ENCODE measurements at regions of chr10 and their contacts with region 1.

Region 1: DNA sequence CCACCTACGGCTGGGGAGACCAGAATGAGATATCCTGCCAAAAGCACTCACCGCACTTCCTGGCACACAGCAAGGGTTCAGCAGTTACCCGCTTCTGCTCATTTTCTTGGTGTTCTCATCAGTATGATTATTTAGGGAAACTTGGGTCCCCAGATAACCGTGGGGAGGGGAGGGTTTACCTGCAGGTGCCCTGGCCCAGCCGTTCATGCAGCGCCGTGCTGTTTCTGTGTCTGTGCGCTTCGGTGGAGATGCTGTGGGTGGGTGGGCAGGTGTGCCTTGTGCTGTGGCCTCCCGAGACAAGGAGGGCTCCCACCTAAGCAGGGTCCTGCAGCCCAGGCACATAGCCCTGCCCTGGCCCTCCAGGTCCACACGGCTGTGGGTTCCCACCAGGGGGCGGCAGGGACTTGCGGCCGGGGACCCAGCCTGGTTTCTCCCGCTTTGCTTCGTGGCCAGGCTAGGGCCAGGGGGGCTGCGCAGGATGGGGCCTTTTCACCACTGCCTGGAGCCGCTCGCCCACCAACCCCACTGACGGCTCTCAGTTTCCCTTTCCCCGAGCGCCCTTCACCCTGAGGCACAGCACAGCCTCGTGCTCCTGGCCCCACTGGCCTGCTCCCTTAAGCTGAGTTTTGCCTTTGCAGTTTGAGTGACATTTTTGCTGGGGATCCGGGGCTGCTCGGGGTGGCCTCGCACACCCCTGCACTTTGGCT is 78.5 kb downstream of the LHPP start:
- DNase-seq: peak; percentile 89

Region 2: DNA sequence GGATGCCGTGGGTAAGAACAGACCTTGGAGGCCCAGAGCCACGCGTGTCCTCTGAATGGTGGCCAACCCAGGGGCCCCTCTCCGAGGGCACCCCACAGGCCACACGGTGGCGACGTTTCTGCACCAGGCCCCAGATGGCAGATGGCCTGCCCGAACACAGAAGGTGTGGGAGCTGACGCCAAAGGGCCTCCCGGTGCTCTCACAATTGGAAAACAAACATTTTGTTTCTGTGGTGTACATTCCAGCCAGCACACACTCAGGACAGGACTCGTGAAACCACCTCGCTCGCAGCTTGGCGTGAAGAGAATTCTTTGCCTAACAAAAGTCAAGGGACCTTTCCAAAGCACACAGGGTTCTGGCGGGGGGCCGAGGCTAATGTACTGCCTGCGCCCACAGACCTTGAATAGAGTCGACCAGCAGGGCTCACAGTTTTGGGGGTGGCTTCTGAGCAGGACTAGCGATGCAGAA is 92.0 kb after region 1 on chr10:
- intact Hi-C with region 1: loop called (anchors 5 kb)
- DNase-seq: no peak

Region 3: DNA sequence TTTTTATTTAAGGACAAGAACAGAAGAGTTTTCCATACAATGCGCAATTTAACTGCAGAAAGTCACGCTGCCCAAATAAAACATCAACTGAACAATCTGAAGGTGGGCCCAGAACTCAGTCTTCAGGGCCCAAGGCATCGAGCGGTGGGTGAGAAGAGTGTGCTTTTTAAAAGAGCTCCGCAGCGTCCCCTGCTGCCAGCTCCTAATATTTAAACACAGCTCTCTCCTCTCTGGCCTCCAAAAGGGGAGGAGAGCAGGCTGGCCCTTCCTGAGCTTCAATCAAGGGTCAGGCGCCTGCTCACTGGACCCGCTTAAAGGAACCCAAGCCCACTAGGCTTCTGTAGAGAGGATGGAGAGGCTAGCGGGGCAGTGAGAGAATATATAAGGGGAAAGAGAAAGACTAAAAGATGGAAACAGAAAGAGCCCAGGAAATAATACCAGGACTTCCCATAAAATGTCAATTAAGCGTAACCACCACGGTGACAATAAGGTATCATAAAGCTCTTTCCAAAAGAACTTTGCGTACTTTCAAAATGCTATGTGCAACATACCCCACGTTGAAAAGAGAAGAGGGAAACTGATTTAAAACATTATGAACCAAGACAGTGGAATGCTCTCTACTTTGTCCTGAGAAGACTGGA is 201.3 kb after region 1 on chr10:
- intact Hi-C with region 1: loop called (anchors 1 kb)
- DNase-seq: peak; percentile 93

Region 4: GRCh38 chr10:124827474-124827873 is 287.4 kb after region 1 on chr10:
- intact Hi-C with region 1: loop called (anchors 5 kb)
- DNase-seq: no peak